ENCODE measurements at regions of chr15 and their contacts with region 1.

Region 1: DNA sequence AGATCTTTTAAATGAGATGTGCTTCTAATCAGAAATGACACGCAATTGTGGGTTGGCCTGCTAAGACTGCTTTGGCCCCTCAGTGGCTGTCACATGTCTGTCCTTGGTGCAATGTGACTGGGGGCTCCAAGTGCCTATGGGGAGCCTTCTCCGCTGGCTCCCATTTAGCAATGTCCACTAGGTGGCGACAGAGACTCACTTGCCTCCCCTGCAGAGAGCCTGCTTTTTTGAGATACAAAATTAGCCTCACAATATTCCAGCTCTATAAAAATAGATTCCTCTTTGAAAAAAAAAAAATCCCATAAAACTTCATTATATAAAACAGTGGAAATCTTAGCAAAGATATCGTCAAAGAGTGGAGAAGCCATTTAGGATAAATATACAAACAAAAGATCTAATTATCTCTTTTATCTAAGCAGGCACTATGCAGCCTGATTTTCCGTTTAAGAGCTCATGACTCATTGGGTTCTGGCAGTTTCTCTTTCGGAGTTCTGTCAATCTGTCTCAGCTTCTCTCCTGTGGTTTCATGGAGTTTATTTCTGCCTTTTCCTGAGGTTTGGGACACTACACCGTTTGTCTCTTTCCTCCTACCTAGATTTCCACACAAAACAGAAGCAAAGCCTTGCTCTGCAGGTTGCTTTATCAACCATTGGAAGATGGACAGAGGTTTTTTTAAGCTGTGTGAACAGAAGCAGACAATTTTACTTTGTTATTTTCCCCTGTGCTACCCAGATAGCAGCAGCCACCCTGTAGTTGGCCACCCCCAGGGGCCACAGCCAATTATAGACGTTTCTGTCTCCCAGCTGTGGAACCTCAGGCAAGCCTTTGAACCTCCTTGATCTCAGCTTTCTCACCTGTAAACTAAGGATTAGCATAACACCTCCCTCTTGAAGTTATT is 68.4 kb upstream of the TNFAIP8L3 start:
- DNase-seq: peak; percentile 78
- H3K4me3 Mint-ChIP-seq: no peak overlapping the region
- H3K27ac Mint-ChIP-seq: no peak overlapping the region
- H3K4me1 Mint-ChIP-seq: no peaks in the 10 kb centered on the region
- H3K27me3 Mint-ChIP-seq: peaks cover 70% of the 10 kb centered on the region
- CTCF ChIP-seq: peak; percentile 92

Region 2: DNA sequence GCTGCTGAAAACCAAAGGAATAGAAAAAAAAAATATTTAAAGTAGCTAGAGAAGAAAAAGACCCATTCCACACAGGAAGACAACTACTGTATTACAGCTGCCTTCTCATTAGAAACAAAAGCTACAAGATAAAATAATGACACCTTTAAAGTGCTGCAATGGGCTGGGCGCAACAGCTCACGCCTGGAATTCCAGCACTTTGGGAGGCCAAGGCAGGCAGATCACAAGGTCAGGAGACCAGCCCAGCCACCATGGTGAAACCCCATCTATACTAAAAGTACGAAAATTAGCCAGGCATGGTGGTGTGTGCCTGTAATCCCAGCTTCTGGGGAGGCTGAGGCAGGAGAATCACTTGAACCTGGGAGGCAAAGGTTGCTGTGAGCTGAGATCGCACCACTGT is 507.6 kb before region 1 on chr15:
- CTCF ChIA-PET with region 1: no interaction called
- intact Hi-C with region 1: no loop called
- DNase-seq: no peak
- H3K4me3 Mint-ChIP-seq: no peak overlapping the region
- H3K27ac Mint-ChIP-seq: no peak overlapping the region
- H3K4me1 Mint-ChIP-seq: peaks cover 7% of the 10 kb centered on the region
- H3K27me3 Mint-ChIP-seq: no peaks in the 10 kb centered on the region
- CTCF ChIP-seq: no peak

Region 3: DNA sequence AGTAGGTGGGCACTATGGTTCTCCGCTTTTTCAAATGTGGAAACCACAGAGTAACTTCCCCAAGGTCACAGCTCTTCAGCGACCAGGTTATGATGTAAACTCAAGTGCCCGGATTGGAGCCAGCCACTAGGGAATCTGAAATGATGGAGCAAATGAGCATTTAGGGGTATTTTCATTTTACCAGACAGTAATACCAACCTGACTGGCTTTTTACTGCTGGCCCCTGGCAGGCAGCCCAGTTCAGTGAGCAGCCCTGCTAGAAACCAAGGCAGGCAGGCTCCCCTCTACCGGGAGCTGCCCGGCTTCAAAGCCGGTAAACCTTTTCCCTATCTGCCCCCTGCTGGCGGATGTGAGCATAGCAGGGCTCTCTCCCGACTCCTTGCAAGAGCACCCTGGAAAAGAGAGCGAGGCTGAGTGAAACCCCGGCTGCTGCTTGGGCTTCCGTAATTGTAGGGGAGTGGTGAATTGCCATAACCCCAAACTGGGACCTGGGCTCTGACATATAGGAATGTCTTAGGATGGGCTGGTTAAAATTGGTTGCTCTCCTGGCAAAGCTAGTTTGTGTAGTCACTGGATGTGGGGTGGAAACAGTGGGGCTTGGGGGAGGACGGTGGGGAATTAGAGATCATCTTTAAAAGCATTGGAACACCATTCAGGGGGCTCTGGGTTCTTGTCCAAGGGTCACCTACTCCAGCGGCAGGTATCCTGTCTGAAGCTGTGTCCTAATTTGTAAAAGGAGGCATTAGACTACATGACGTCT is 29.6 kb after region 1 on chr15:
- CTCF ChIA-PET with region 1: interaction called, 41 read pairs
- intact Hi-C with region 1: loop called (anchors 1 kb)
- DNase-seq: peak; percentile 94
- H3K4me3 Mint-ChIP-seq: no peak overlapping the region
- H3K27ac Mint-ChIP-seq: no peak overlapping the region
- H3K4me1 Mint-ChIP-seq: no peaks in the 10 kb centered on the region
- H3K27me3 Mint-ChIP-seq: peaks cover 63% of the 10 kb centered on the region
- CTCF ChIP-seq: peak; percentile 98

Region 4: GRCh38 chr15:51281368-51281967 is 118.4 kb after region 1 on chr15:
- CTCF ChIA-PET with region 1: interaction called, 5 read pairs
- intact Hi-C with region 1: loop called (anchors 5 kb)
- DNase-seq: peak; percentile 69
- H3K4me3 Mint-ChIP-seq: no peak overlapping the region
- H3K27ac Mint-ChIP-seq: no peak overlapping the region
- H3K4me1 Mint-ChIP-seq: peaks cover 7% of the 10 kb centered on the region
- H3K27me3 Mint-ChIP-seq: peaks cover 95% of the 10 kb centered on the region
- CTCF ChIP-seq: peak; percentile 64

Region 5: GRCh38 chr15:51401872-51402517 is 238.9 kb after region 1 on chr15:
- CTCF ChIA-PET with region 1: interaction called, 12 read pairs
- intact Hi-C with region 1: loop called (anchors 2 kb)
- DNase-seq: peak; percentile 72
- H3K4me3 Mint-ChIP-seq: no peak overlapping the region
- H3K27ac Mint-ChIP-seq: no peak overlapping the region
- H3K4me1 Mint-ChIP-seq: no peaks in the 10 kb centered on the region
- H3K27me3 Mint-ChIP-seq: peaks cover 88% of the 10 kb centered on the region
- CTCF ChIP-seq: peak; percentile 75